ENCODE measurements at regions of chr15 and their contacts with region 1.

Region 1: GRCh38 chr15:50354838-50355618 is at the start of gene GABPB1:
- DNase-seq: peak; percentile 97
- H3K4me3 Mint-ChIP-seq: peak within 1 kb of the TSS; percentile 92
- H3K27ac Mint-ChIP-seq: peak within 1 kb of the TSS; percentile 100
- H3K4me1 Mint-ChIP-seq: peaks cover 42% of the 10 kb centered on the region
- H3K27me3 Mint-ChIP-seq: peaks cover 2% of the 10 kb centered on the region
- total RNA-seq, gene GABPB1: 78.3 and 79.5 TPM in 2 replicates

Region 2: GRCh38 chr15:48925714-48926223 is 1429.3 kb before region 1 on chr15:
- intact Hi-C with region 1: loop called (anchors 10 kb)
- DNase-seq: peak; percentile 70
- H3K4me3 Mint-ChIP-seq: peak overlapping the region; percentile 46
- H3K27ac Mint-ChIP-seq: peak overlapping the region; percentile 97
- H3K4me1 Mint-ChIP-seq: peaks cover 61% of the 10 kb centered on the region
- H3K27me3 Mint-ChIP-seq: peaks cover 2% of the 10 kb centered on the region

Region 3: DNA sequence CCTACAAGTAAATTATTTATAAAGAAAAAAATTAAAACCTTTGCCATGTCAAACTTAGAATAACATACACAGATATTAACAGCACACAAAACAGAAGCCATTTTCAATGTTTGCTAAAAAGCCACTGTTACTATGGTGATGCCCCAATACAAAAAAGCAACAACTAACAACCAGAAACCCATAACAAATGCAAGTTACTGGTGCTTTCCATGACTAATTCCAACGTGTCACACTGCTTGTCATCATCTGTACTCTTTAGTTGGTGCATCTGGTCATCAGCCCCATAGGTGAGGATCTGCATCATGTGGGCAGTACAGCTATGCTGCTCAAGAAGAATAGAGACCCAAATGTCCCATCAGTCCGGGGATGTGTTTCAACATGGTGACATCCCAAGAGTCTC is 288.8 kb before region 1 on chr15:
- intact Hi-C with region 1: loop called (anchors 5 kb)
- DNase-seq: peak; percentile 80
- H3K4me3 Mint-ChIP-seq: peak overlapping the region; percentile 27
- H3K27ac Mint-ChIP-seq: peak overlapping the region; percentile 91
- H3K4me1 Mint-ChIP-seq: peaks cover 38% of the 10 kb centered on the region
- H3K27me3 Mint-ChIP-seq: no peaks in the 10 kb centered on the region

Region 4: DNA sequence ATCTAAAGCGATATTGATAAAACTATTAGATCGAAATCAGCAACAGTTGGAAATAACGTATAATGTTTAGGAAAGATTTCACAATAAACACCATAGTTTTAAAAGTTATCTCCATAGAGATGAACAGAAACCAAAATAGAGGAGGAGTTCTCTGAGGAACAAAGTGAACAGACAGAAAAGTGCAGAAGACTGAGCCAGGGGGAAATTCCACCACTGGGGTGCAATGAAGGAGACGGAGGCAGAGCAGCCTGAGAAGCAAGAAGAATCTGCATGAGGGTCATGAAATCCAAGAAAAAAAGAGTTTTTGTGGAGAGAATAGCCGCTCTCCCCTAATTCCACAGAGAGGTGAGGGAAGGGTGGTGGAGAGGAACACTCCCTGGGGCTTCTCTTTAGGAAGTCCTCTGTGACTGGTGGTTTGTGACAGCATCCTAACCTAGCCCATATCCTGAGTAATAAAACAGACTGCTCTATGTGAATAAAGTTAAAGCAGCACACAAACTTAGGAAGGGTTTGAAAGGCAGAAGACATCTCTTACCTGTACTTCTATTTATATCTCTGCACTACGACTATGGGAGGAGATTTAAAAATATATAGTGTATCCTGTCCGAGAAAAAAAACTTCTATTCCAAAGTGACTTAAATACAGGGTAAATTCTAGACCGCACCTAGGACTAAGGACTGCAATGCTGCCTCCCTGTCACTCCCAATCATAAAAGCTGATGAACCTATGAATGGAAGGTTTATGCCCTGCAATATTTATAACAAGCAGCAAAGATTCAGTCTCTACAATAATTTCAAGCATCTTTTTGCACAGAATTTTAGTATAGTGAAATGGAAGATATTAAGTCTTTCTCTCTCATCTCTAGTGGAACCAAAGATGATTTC is 258.8 kb before region 1 on chr15:
- intact Hi-C with region 1: no loop called
- DNase-seq: peak; percentile 52
- H3K4me3 Mint-ChIP-seq: no peak overlapping the region
- H3K27ac Mint-ChIP-seq: peak overlapping the region; percentile 6
- H3K4me1 Mint-ChIP-seq: peaks cover 18% of the 10 kb centered on the region
- H3K27me3 Mint-ChIP-seq: no peaks in the 10 kb centered on the region

Region 5: GRCh38 chr15:50260969-50261496 is 94.0 kb before region 1 on chr15:
- intact Hi-C with region 1: loop called (anchors 1 kb)
- DNase-seq: peak; percentile 61
- H3K4me3 Mint-ChIP-seq: peak overlapping the region; percentile 71
- H3K27ac Mint-ChIP-seq: peak overlapping the region; percentile 95
- H3K4me1 Mint-ChIP-seq: peaks cover 68% of the 10 kb centered on the region
- H3K27me3 Mint-ChIP-seq: no peaks in the 10 kb centered on the region

Region 6: DNA sequence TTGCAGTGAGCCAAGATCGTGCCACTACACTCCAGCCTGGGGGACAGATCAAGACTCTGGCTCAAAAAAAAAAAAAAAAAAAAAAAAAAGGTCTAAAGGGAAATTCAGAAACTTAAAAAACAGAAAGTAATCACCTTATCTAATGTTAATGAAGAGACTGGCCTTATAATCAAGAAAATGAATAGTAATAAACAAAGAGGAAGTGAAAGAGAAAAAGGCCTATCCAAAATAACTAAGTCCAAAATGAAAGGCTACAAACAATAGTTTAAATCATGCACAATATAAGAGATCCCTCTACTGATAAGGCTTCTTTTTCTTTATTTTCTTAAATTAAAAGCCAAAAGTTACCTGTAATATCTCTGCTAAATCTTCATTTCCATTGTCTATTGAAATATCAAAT is 52.4 kb before region 1 on chr15:
- intact Hi-C with region 1: no loop called
- DNase-seq: no peak
- H3K4me3 Mint-ChIP-seq: no peak overlapping the region
- H3K27ac Mint-ChIP-seq: no peak overlapping the region
- H3K4me1 Mint-ChIP-seq: no peaks in the 10 kb centered on the region
- H3K27me3 Mint-ChIP-seq: no peaks in the 10 kb centered on the region

Region 7: DNA sequence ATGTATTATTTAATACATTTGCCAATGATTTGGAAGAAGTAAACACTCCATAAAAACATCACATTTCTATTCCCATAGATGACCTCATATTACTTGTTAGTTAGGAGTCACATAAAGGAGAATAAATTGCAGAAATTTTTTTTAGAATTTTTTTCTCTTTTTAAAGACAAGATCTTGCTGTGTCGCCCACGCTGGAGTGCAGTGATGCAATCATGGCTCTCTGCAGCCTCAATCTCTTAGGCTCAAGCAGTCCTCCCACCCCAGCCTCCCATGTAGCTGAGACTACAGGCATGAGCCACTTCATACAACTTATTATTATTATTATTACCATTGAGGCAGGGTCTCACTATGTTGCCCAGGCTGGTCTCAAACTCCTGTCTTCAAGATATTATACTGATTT is 56.8 kb after region 1 on chr15:
- intact Hi-C with region 1: no loop called
- DNase-seq: no peak
- H3K4me3 Mint-ChIP-seq: no peak overlapping the region
- H3K27ac Mint-ChIP-seq: no peak overlapping the region
- H3K4me1 Mint-ChIP-seq: peaks cover 2% of the 10 kb centered on the region
- H3K27me3 Mint-ChIP-seq: peaks cover 12% of the 10 kb centered on the region

Region 8: GRCh38 chr15:50424066-50424890 is 69.2 kb after region 1 on chr15 and contains the start of gene USP8:
- intact Hi-C with region 1: loop called (anchors 1 kb)
- DNase-seq: peak; percentile 98
- H3K4me3 Mint-ChIP-seq: peak within 1 kb of the TSS; percentile 96
- H3K27ac Mint-ChIP-seq: peak within 1 kb of the TSS; percentile 96
- H3K4me1 Mint-ChIP-seq: peaks cover 19% of the 10 kb centered on the region
- H3K27me3 Mint-ChIP-seq: no peaks in the 10 kb centered on the region
- total RNA-seq, gene USP8: 56.9 and 60.9 TPM in 2 replicates

Region 9: GRCh38 chr15:50765195-50765973 is 410.4 kb after region 1 on chr15 and contains the start of gene SPPL2A:
- intact Hi-C with region 1: loop called (anchors 1 kb)
- DNase-seq: peak; percentile 94
- H3K4me3 Mint-ChIP-seq: peak within 1 kb of the TSS; percentile 92
- H3K27ac Mint-ChIP-seq: peak within 1 kb of the TSS; percentile 97
- H3K4me1 Mint-ChIP-seq: peaks cover 54% of the 10 kb centered on the region
- H3K27me3 Mint-ChIP-seq: no peaks in the 10 kb centered on the region
- total RNA-seq, gene SPPL2A: 85.0 and 86.6 TPM in 2 replicates